Activated CD4-positive, alpha-beta memory T cell treated with anti-CD3 and anti-CD28 coated beads, Interleukin-2, amount 10 ng/mL, durations not matched to agents 7 days and 5 days (primary cell): ENCODE measurements at regions of chr10 and their contacts with region 1.

Region 1: DNA sequence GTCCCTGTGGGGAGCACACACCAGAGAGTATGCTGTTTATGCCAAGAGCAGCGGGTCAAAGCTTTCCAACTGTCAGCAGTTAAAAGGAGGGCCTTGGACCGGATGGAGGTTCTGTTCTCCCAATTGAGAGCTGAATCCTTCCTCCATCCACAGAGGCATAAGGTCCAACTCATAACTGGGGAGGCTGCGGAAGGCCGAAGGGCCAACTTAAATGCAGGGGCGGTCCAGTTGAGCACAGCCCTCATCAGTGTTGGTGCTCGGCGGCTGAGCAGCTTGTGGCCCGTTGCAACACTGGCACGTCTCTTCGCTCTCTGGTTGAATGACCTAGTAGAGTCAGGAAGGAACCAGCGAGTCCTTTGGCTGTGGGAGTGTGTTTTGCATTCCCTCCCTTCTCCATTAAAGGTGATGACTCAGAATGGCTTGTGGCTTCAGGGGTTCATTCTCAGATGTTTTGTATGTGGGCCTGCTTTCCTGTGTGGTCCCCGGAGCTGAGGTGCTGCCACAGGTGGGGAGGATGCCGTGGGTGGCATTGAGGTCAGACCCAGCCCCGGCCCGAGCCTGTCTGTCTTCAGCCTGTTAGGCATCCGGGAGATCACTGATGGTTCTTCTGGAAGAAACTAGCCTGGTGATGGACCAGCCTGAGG is 44.8 kb upstream of the DMBT1 start:
- DNase-seq: peak; percentile 81
- H3K4me3 Mint-ChIP-seq: no peak overlapping the region
- H3K27ac Mint-ChIP-seq: peak overlapping the region; percentile 56
- H3K4me1 Mint-ChIP-seq: peaks cover 34% of the 10 kb centered on the region
- H3K27me3 Mint-ChIP-seq: peaks cover 6% of the 10 kb centered on the region

Region 2: DNA sequence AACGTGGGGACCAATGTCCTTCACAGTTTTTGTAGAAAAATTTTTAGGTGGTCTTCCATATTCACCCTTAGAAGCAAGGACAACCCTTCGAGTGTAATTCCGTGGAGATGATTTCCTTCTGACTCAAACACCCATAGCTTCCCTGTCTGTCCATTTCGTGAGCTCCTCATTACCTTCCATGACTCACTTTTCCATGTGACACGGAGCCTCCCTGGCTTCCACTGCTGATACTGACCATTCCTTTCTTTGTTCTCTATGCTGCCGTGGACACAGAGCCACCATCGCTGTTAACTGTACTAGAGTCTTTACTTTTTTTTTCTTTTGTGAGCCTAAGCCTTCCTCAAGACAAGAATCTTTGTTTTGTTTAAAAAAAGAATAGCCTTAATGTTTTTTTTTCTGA is 73.7 kb before region 1 on chr10:
- CTCF ChIA-PET with region 1: no interaction called
- POLR2A ChIA-PET with region 1: no interaction called
- DNase-seq: no peak
- H3K4me3 Mint-ChIP-seq: no peak overlapping the region
- H3K27ac Mint-ChIP-seq: no peak overlapping the region
- H3K4me1 Mint-ChIP-seq: no peaks in the 10 kb centered on the region
- H3K27me3 Mint-ChIP-seq: peaks cover 5% of the 10 kb centered on the region

Region 3: DNA sequence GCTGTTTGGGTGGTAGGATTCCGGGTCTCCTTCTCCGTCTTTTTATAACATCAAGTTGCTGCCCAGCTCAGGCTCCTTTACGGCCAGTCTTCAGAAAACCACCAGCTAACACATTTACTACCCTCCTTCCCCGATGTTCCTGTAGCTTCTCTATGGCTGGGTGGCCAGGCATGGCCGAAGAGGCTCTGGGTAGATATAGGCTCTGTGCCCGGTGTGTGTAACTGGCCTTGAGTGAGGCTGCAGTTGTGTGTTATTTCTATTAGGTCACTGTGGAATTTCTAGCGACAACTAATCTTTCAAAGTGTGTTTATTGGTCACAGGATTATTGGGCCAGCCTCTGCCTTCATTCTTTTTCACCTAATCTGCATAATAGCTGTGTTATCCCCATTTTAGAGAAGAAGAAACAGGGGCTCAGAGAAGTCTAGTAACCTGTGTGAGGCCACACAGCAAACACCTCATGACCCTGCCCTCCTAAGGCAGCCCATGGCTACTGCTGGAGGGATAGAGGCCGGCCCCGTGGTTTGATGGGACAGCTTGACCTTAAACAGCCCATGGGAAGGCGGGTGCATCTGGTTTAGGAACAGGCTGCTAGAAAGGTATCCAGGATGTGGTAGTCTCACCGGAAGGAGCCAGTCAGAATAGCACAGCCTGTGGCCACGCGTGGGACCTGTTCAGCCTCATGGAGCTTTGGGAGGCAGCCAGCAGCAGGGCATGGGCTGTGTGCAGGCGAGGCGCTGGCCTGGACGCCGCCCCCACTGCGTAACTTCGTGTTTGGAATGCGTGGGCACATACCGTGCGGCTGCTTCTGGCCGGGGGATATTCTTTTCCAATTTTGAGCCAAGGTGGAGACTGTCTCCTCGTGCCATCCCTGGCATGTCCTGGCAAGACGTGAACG is 24.7 kb before region 1 on chr10:
- CTCF ChIA-PET with region 1: interaction called, 3 read pairs
- POLR2A ChIA-PET with region 1: interaction called, 19 read pairs
- DNase-seq: peak; percentile 71
- H3K4me3 Mint-ChIP-seq: no peak overlapping the region
- H3K27ac Mint-ChIP-seq: no peak overlapping the region
- H3K4me1 Mint-ChIP-seq: peaks cover 26% of the 10 kb centered on the region
- H3K27me3 Mint-ChIP-seq: peaks cover 25% of the 10 kb centered on the region